Prostate gland (tissue), 2 donors: ENCODE measurements at regions of chr9 and their contacts with region 1.

Region 1: DNA sequence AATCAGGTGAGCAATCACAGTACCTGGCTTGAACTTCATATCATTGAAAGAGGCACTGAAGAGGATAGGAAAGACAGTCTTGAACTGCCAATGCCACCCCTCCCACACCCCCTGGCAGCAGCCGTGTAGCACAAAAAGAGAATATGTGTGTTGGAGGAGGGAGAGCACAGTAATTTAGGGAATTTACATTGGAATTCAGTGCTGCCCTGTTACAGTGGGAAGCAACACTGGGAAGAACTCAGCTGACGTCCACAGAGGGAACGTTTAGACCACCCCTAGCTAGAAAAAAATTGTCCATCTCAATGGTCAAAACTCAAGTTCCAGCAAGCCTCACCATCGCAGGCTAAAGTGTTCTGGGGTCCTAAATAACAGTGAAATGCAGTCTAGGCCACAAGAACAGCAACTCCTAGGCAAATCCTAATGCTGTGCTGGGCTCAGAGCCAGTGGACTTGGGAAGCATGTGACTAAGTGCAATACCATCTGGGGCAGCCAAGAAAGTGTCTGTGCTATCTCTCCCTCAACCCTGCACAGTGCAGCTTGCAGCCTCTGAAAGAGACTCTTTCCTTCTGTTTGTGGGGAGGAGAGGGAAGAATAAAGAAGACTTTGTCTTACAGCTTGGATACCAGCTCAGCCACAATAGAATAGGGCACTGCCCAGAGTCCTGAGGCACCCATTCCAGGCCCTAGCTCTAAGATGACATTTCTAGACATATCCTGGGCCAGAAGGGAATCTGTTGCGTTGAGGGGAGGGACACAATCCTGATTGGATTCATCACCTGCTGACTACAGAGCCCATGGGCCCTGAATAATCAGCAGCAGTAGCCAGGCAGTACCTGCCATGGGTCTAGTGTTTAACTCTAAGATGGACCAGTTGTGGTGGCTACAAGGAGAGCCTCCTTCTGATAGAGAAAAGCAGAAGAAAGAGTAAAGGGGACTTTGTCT is 62.1 kb upstream of the VLDLR start:
- DNase-seq: no peak
- H3K4me3 ChIP-seq: no peak overlapping the region
- H3K27ac ChIP-seq: no peak overlapping the region
- H3K4me1 ChIP-seq: no peaks in the 10 kb centered on the region
- H3K27me3 ChIP-seq: no peaks in the 10 kb centered on the region
- CTCF ChIP-seq: no peak
- POLR2A ChIP-seq: no peak

Region 2: GRCh38 chr9:2727966-2728613 is 168.6 kb after region 1 on chr9:
- intact Hi-C with region 1: loop called (anchors 5 kb)
- DNase-seq: peak; percentile 39
- H3K4me3 ChIP-seq: no peak overlapping the region
- H3K27ac ChIP-seq: no peak overlapping the region
- H3K4me1 ChIP-seq: no peaks in the 10 kb centered on the region
- H3K27me3 ChIP-seq: no peaks in the 10 kb centered on the region
- CTCF ChIP-seq: peak; percentile 25 to 82 (median 64)
- POLR2A ChIP-seq: no peak